ENCODE measurements at regions of chr11 and their contacts with region 1.

Region 1: DNA sequence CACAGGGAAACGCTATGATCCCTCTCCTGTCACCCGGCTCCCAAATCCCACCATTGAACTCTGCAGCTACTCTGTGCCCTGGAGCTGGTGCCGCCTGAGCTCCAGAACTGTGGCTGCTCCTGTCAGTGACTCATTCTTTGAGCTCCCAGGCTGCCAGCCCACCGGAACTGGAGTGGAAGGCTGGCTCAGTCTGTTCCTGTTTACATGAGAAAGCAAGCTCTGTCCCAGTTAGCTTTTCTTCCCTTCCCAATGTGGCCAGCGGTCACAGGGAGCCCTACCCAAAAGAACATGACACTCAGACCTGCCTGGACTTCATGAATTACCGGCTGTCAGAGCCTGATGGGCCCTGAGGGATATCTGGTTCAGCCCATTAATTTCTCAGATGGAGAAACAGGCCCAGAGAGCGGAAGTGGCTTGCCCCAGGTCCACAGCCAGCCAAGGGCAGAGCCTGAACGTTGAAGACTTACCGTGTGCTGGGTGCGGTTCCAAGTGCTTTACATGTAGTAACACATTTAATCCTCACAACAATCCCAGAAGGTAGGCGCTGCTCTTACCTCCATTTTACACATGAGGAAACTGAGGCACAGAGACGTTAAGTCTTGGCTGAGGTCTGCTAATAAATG is 23.8 kb upstream of the IGSF22 start:
- DNase-seq: peak in 1 of 2 donors; percentile 34
- ATAC-seq: peak; percentile 72 to 74
- H3K4me3 ChIP-seq: no peak overlapping the region
- H3K27ac ChIP-seq: no peak overlapping the region
- H3K4me1 ChIP-seq: no peaks in the 10 kb centered on the region
- H3K27me3 ChIP-seq: no peaks in the 10 kb centered on the region
- CTCF ChIP-seq: no peak
- POLR2A ChIP-seq: no peak

Region 2: DNA sequence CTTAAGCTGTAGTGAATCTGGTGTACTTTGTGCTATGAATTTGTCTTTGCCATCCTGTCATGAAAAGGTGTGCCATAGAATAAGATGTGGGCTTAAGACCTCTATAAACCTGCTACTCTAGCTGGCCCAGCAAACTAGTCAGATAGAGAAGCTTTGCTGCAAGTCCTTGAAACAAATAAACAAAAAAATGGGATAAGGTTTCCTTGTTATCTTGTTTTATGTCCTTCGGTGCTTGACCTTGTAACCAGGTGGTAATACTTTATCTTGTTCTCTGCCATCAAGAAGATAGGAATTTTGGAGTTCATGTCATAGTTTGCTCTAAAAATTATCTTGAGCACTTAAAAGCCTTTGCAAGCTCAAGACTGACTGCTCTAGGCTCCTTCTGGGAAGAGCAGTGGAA is 65.5 kb before region 1 on chr11:
- in situ Hi-C with region 1: loop called in 1 of 4 experiments (anchors 10 kb)
- intact Hi-C with region 1: no loop called
- DNase-seq: no peak
- ATAC-seq: no peak
- H3K4me3 ChIP-seq: no peak overlapping the region
- H3K27ac ChIP-seq: no peak overlapping the region
- H3K4me1 ChIP-seq: no peaks in the 10 kb centered on the region
- H3K27me3 ChIP-seq: no peaks in the 10 kb centered on the region
- CTCF ChIP-seq: no peak
- POLR2A ChIP-seq: no peak